ENCODE measurements at regions of chr15 and their contacts with region 1.

Region 1: DNA sequence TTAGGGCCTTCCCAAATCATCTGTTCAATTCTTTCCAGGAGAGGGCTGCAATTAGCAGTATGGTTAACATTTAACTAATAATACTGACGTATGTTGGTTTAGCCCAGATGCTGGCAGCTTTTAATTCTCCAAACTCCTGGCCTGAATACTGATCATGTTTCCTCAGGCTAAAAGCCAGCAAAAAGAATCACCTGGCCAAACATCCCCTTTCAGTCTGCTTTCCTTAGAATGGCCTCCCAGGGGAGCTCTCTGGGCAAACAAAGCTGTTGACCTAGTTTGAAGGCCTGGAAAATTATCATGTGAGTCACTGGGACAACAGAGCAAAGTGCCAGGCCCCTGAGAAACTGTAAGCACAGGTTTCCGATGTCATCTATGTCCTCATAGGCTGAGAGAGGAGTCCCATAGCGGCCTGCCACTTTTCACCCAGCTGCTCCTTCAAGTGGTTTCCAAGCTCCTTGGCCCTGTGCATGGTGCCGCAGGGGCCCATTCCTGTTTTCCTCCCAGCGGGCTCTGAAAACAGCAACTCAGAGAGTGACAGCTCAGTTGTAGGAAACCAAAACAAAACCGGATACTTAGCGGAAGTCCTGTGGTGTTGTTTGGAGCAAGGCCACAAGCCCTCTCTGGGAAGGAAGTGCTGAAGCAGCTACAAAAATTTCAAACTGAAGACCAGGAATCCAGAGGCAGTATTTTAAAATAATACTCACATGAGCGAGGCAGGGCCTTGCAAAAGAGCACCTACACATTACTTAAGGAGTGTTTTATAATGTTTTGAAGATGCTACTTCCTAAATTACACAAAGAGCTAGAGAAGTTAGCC is 36.5 kb upstream of the RAB11A start:
- DNase-seq: peak; percentile 95
- H3K4me3 ChIP-seq: peak overlapping the region in 1 of 2 donors; percentile 9
- H3K27ac ChIP-seq: peak overlapping the region; percentile 81 to 85
- H3K4me1 ChIP-seq: peaks cover 11% of the 10 kb centered on the region
- H3K27me3 ChIP-seq: no peaks in the 10 kb centered on the region
- CTCF ChIP-seq: peak in 2 of 4 experiments; percentile 36 to 45
- POLR2A ChIP-seq: peak; percentile 26

Region 2: GRCh38 chr15:65638681-65639089 is 194.1 kb before region 1 on chr15:
- intact Hi-C with region 1: loop called (anchors 10 kb)
- DNase-seq: peak; percentile 45
- H3K4me3 ChIP-seq: no peak overlapping the region
- H3K27ac ChIP-seq: no peak overlapping the region
- H3K4me1 ChIP-seq: peaks cover 3% of the 10 kb centered on the region
- H3K27me3 ChIP-seq: no peaks in the 10 kb centered on the region
- CTCF ChIP-seq: peak; percentile 46 to 84 (median 77)
- POLR2A ChIP-seq: no peak

Region 3: DNA sequence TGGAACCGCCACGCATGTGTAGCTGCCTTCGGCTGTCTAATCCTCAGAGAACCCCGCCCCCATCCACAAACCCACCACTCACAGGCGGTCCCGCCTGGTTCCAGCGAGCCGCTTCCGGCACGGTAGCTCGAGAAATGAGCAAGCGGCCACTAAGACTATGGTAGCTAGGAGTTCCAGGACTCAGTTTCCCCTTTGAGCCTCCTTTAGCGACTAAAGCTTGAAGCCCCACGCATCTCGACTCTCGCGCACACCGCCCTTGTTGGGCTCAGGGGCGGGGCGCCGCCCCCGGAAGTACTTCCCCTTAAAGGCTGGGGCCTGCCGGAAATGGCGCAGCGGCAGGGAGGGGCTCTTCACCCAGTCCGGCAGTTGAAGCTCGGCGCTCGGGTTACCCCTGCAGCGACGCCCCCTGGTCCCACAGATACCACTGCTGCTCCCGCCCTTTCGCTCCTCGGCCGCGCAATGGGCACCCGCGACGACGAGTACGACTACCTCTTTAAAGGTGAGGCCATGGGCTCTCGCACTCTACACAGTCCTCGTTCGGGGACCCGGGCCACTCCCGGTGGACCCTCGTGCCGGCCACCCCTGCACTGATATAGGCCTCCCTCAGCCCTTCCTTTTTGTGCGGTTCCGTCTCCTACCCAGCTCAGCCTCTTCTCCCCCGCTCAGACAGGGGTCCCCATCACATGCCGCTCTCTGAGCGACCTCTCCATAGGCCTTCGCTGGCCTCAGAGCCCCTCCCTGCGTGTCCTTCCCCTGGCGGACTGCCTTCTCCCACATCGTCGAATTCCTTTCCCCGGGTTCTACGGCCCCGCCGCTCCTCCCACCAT is 36.6 kb after region 1 on chr15 and contains the start of gene RAB11A:
- intact Hi-C with region 1: loop called (anchors 2 kb)
- DNase-seq: peak; percentile 94
- H3K4me3 ChIP-seq: peak within 1 kb of the TSS; percentile 84 to 95
- H3K27ac ChIP-seq: peak within 1 kb of the TSS; percentile 96 to 98
- H3K4me1 ChIP-seq: no peaks in the 10 kb centered on the region
- H3K27me3 ChIP-seq: no peaks in the 10 kb centered on the region
- CTCF ChIP-seq: peak in 3 of 4 experiments; percentile 37 to 44 (median 42)
- POLR2A ChIP-seq: peak; percentile 95
- total RNA-seq, gene RAB11A: 178 to 223 TPM

Region 4: DNA sequence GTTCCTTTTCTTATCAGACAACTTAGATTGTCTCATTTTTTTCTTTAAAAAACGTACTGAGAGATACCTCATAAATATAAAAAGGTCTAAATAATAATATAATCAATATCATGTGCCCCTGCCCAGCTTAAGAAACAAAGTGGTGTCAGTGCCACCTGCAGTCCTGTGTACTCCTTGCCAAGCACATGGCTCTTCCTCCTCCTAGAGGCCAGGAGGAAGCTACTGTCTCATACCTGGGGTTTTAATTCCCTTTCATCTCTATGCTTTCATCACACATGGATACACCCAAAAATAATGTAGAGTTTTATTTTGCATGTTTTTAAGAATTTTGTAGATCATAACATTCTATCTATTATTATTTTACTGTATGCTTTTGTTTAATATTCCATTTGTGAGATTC is 1589.5 kb after region 1 on chr15:
- intact Hi-C with region 1: no loop called
- DNase-seq: no peak
- H3K4me3 ChIP-seq: no peak overlapping the region
- H3K27ac ChIP-seq: no peak overlapping the region
- H3K4me1 ChIP-seq: no peaks in the 10 kb centered on the region
- H3K27me3 ChIP-seq: no peaks in the 10 kb centered on the region
- CTCF ChIP-seq: no peak
- POLR2A ChIP-seq: no peak

Measured in prostate gland (tissue), 2 donors.